Head of caudate nucleus (tissue), 42 donors: ENCODE measurements at regions of chr3 and their contacts with region 1.

Region 1: GRCh38 chr3:12471243-12471651 is 13.0 kb upstream of the TSEN2 start:
- DNase-seq: peak in 10 of 42 donors; percentile 8 to 57 (median 32)

Region 2: DNA sequence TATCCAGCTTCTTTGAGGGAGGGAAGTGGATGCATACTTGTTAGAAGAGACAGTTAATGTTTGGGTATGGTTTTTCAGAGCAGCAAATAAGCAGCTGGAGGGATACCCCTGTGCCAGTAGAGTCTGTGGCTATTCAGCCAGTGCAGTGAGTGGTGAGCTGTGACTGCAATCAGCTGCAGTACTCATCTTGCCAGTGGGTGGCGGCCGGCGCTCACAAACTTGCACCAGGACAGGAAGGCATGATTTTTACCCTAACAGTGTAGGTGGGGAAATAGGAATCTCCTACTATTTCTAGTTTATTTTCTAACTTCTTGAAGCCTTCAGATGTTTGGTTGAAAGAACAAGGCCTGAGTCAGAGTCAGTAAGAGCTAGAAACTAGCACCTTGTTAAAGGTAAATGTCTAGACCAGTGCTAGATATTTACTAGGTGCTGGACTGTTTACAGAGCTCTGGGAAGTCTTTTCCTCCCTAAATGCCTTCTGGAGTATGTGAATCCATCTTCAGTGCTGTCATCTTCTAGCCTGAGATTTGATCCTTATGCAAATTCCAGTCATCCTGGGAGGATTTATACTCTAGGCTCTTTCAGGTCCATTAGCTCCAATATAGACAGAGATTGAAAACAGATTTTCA is 336.1 kb before region 1 on chr3:
- intact Hi-C with region 1: loop called (anchors 5 kb)
- DNase-seq: peak; percentile 36 to 83 (median 66)

Region 3: GRCh38 chr3:12687962-12688361 is 216.7 kb after region 1 on chr3:
- intact Hi-C with region 1: no loop called
- DNase-seq: no peak